Left cardiac atrium (tissue), 4 donors: ENCODE measurements at regions of chr1 and their contacts with region 1.

Region 1: DNA sequence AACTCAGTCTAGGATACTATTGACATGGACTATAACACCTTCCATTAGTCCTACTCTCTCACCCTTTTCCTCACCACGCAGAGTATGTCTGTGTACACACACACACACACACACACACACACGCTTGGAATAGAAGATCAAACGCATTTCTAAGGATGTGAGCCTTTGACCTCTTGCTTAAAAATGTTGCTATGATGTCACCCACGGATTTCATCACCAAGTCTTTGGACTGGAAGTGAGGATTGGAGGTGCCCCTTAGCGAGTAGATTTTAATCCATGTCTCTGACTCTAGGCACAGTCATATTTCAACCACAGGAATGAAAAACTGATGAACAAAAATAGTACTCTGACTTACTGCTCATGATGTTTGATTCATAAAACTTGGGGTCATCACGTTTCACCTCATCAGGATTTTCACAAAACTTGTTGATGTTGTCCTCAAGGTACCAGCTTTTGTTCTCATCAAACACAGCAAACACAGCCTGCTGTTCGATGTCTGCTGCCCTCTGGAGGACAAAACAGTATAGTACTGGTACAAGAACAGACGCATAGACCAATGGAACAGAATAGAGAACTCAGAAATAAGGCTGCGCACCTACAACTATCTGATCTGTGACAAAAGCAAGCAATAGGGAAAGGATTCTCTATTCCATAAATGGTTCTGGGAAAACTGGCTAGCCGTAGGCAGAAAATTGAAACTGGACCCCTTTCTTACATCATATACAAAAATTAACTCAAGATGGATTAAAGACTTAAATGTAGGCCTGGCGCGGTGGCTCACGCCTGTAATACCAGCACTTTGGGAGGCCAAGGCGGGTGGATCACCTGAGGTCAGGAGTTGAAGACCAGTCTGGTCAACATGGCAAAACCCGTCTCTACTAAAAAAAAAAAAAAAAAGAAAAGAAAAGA is 39.9 kb downstream of the F5 start:
- DNase-seq: peak; percentile 27
- ATAC-seq: peak; percentile 81 to 86

Region 2: GRCh38 chr1:168342572-168343280 is 1203.6 kb before region 1 on chr1:
- intact Hi-C with region 1: loop called in 1 of 2 experiments (anchors 5 kb)
- DNase-seq: peak; percentile 87
- ATAC-seq: peak; percentile 99

Region 3: GRCh38 chr1:169175461-169175860 is 370.9 kb before region 1 on chr1:
- intact Hi-C with region 1: no loop called
- DNase-seq: no peak
- ATAC-seq: no peak

Region 4: GRCh38 chr1:169466259-169467230 is 79.8 kb before region 1 on chr1:
- intact Hi-C with region 1: loop called in 1 of 2 experiments (anchors 5 kb)
- DNase-seq: no peak
- ATAC-seq: peak in 1 of 2 donors; percentile 39

Region 5: DNA sequence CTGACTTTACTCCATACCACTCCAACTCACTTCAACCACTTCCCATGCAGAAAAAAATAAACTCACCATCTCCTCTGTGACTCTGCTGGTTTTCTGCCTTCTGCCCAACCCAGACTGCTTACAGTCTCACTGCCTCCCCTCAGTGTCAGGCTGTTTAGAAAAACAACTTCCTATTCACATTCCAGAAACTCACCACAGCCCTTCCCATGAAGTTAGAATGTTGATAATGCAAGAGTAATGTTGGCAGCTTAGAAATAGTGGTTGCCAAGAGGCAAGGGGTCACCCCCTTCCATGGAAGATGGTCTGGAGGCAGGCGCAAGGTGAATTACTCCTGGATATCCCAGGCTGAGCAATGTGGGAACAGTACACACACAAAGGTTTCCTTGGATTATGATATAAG is 83.7 kb after region 1 on chr1 and contains the start of gene SELP:
- intact Hi-C with region 1: no loop called
- DNase-seq: no peak
- ATAC-seq: no peak
- total RNA-seq, gene SELP: 12.4 to 22.5 TPM

Region 6: DNA sequence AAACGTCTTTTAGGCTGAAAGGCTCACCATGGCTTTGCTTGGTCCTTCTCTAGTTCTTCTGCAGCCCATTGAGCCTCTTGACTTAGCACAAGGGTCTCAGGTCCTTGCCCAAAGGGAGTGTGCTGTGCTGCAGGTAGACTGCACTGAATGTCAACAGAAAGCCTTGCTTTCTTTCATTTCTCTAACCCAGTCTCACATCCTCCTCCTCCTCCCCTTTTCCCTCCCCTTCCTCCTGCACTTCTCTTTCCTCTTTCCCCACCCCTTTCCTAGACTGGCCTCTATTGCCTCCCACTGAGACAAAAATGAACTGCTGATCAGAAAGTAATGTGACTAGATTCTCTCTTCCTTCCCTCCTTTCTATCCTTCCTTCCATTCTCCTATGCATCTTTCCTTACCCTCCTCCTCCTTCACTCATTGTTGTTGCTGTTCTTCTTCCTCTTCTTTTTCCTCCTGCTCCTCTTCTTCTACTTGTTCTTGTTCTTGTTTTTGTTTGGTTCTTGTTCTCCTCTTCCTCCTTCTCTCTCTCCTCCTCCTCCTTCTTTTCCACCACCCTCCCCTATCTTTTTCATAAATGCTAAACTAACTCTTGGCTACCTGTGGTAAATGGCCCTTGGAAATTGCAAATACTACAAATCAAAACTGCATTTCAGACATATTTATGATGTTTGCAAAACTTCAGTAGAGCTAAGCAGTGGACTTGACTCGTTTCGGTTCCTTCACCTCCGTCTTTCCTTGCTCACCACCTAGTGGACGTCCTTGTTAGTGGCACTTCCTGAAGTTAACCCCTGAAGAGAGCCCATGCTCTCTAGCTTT is 165.3 kb after region 1 on chr1 and contains the start of gene SELL:
- intact Hi-C with region 1: loop called in 1 of 2 experiments (anchors 5 kb)
- DNase-seq: peak; percentile 56
- ATAC-seq: peak; percentile 94 to 97
- total RNA-seq, gene SELL: 3.0 to 4.7 TPM

Region 7: GRCh38 chr1:169809370-169810095 is 263.2 kb after region 1 on chr1:
- intact Hi-C with region 1: loop called in 1 of 2 experiments (anchors 5 kb)
- DNase-seq: peak; percentile 23
- ATAC-seq: no peak